Panc1 (cell line): ENCODE measurements at regions of chr10 and their contacts with region 1.

Region 1: GRCh38 chr10:114605155-114605797 is 52.8 kb downstream of the ABLIM1 start:
- DNase-seq: no peak
- ATAC-seq: no peak
- H3K4me3 ChIP-seq: no peak overlapping the region
- H3K27ac ChIP-seq: peak overlapping the region; percentile 25
- H3K4me1 ChIP-seq: peaks cover 61% of the 10 kb centered on the region
- H3K27me3 ChIP-seq: no peaks in the 10 kb centered on the region
- CTCF ChIP-seq: no peak

Region 2: GRCh38 chr10:114223066-114223465 is 382.2 kb before region 1 on chr10:
- CTCF ChIA-PET with region 1: no interaction called
- POLR2A ChIA-PET with region 1: no interaction called
- in situ Hi-C with region 1: no loop called
- intact Hi-C with region 1: no loop called
- DNase-seq: no peak
- ATAC-seq: peak; percentile 34; the same call in 1 of the 2 replicates
- H3K4me3 ChIP-seq: no peak overlapping the region
- H3K27ac ChIP-seq: no peak overlapping the region
- H3K4me1 ChIP-seq: no peaks in the 10 kb centered on the region
- H3K27me3 ChIP-seq: peaks cover 32% of the 10 kb centered on the region
- CTCF ChIP-seq: no peak

Region 3: GRCh38 chr10:114730291-114730690 is 125.0 kb after region 1 on chr10:
- CTCF ChIA-PET with region 1: no interaction called
- POLR2A ChIA-PET with region 1: interaction called, 13 read pairs
- in situ Hi-C with region 1: no loop called
- intact Hi-C with region 1: no loop called
- DNase-seq: no peak
- ATAC-seq: no peak
- H3K4me3 ChIP-seq: no peak overlapping the region
- H3K27ac ChIP-seq: peak overlapping the region; percentile 100
- H3K4me1 ChIP-seq: peaks cover 63% of the 10 kb centered on the region
- H3K27me3 ChIP-seq: no peaks in the 10 kb centered on the region
- CTCF ChIP-seq: no peak